B cell (primary cell): ENCODE measurements at regions of chr15 and their contacts with region 1.

Region 1: DNA sequence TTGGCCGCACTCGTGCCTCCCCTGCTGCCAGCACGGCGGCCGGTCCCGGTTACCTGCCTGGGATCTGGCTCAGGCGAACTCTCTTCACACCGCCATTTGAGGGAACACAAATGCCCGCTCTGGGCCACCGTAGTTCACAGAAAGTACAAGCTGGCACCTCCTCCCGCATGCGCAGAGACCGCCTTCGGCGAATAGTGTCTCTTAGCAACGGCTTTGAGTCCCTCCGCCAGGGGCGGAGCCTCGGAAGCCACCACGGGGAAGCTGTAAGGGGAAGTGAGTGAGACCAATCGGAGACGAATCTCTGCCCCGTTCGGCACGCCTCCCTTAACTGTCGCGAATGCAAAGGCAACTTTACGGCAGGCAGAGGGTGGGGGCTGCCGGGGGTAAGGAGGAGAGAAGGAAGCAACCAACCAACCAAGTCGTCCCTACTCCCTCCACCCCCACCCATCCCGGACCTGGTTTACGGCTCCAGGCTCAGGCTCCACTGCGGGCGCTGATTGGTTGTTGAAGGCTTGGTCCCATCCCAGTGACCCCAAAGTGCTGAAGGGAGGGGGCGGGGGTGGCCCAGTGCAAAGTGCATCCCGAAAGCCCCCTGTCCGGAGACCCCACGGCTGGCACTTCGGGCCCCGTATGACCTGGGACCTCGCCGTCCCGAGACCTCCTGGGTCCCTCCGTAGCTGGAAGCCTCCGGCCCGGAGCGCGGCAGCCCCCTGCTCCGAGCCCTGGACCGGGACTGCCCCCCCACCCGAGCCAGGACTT is at the starts of genes ASB7 and LINS1:
- DNase-seq: peak; percentile 100
- ATAC-seq: peak; percentile 86
- H3K4me3 ChIP-seq: peak within 1 kb of the TSS; percentile 67 to 95 (median 92)
- H3K4me3 Mint-ChIP-seq: no peak within 1 kb of the TSS
- H3K27ac ChIP-seq: peak within 1 kb of the TSS; percentile 77 to 93
- H3K27ac Mint-ChIP-seq: no peak within 1 kb of the TSS
- H3K4me1 ChIP-seq: peaks cover 20% of the 10 kb centered on the region in 2 donors
- H3K4me1 Mint-ChIP-seq: peaks cover 42% of the 10 kb centered on the region
- H3K27me3 ChIP-seq: no peaks in the 10 kb centered on the region
- H3K27me3 Mint-ChIP-seq: no peaks in the 10 kb centered on the region
- CTCF ChIP-seq: no peak
- total RNA-seq, gene ASB7: 25.0 and 26.5 TPM in 2 replicates
- total RNA-seq, gene LINS1: 39.6 and 46.4 TPM in 2 replicates

Region 2: DNA sequence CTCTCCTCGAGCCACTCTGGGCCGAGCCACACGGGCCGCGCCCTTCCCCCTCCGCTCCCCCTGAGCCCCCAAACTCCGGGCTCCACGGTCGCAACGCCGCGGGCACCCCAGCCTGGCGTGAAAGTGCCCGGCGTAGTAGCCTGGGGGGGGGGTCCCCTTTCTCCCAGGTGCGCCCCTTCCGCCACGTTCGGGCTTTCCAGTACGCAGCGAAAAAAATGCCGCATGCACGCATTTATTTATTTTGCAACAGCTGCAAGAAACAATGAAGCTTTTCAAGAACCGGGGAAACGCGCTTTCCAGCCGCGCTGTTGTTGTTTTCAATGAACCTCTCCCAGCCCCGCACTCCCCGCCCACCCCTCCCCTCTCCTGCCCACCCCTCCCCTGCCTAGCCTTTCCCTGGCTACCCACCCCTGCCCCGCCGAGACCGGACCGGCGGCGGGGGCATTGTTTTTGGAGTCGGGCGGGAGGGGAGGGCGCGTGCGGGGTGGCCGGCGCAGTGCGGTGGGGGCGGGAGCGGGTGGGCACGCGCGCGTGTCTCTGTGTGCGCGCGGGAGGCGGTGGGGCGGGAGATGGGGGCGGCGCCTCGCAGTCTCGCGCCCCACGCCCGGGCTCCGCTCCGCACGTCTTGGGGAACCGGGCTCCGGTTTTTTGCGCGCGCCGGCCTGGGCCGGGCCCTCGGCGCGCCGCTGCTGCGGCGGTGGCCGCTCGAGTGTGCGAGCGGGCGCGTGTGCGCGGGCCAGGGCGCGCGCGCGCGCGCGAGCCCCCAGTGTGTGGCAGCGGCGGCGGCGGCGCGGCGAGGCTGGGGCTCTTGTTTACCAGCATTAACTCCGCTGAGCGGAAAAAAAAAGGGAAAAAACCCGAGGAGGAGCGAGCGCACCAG is 1954.2 kb before region 1 on chr15 and contains the start of gene IGF1R:
- CTCF ChIA-PET with region 1: no interaction called
- POLR2A ChIA-PET with region 1: no interaction called
- intact Hi-C with region 1: loop called (anchors 5 kb)
- DNase-seq: peak; percentile 94
- ATAC-seq: peak; percentile 80
- H3K4me3 ChIP-seq: peak within 1 kb of the TSS; percentile 42 to 81 (median 78)
- H3K4me3 Mint-ChIP-seq: peak within 1 kb of the TSS; percentile 87
- H3K27ac ChIP-seq: peak within 1 kb of the TSS; percentile 49
- H3K27ac Mint-ChIP-seq: peak within 1 kb of the TSS; percentile 92
- H3K4me1 ChIP-seq: peaks cover 23 to 31% of the 10 kb centered on the region in 2 donors
- H3K4me1 Mint-ChIP-seq: peaks cover 23% of the 10 kb centered on the region
- H3K27me3 ChIP-seq: peaks cover 0 to 23% (median 7%) of the 10 kb centered on the region in 4 experiments
- H3K27me3 Mint-ChIP-seq: peaks cover 32% of the 10 kb centered on the region
- CTCF ChIP-seq: peak; percentile 29
- total RNA-seq, gene IGF1R: 23.1 and 27.3 TPM in 2 replicates

Region 3: GRCh38 chr15:99733268-99734039 is 868.8 kb before region 1 on chr15 and contains the start of gene LYSMD4:
- CTCF ChIA-PET with region 1: no interaction called
- POLR2A ChIA-PET with region 1: no interaction called
- intact Hi-C with region 1: loop called (anchors 5 kb)
- DNase-seq: peak; percentile 96
- ATAC-seq: peak; percentile 100
- H3K4me3 ChIP-seq: peak within 1 kb of the TSS; percentile 12 to 89 (median 77)
- H3K4me3 Mint-ChIP-seq: peak within 1 kb of the TSS; percentile 90
- H3K27ac ChIP-seq: peak within 1 kb of the TSS; percentile 70 to 77
- H3K27ac Mint-ChIP-seq: peak within 1 kb of the TSS; percentile 90
- H3K4me1 ChIP-seq: peaks cover 10 to 13% of the 10 kb centered on the region in 2 donors
- H3K4me1 Mint-ChIP-seq: peaks cover 14% of the 10 kb centered on the region
- H3K27me3 ChIP-seq: no peaks in the 10 kb centered on the region
- H3K27me3 Mint-ChIP-seq: no peaks in the 10 kb centered on the region
- CTCF ChIP-seq: no peak
- total RNA-seq, gene LYSMD4: 8.6 and 9.7 TPM in 2 replicates

Region 4: GRCh38 chr15:100537331-100537730 is 64.9 kb before region 1 on chr15:
- CTCF ChIA-PET with region 1: no interaction called
- POLR2A ChIA-PET with region 1: no interaction called
- intact Hi-C with region 1: loop called (anchors 1 kb)
- DNase-seq: peak; percentile 68
- ATAC-seq: peak; percentile 94
- H3K4me3 ChIP-seq: no peak overlapping the region
- H3K4me3 Mint-ChIP-seq: no peak overlapping the region
- H3K27ac ChIP-seq: no peak overlapping the region
- H3K27ac Mint-ChIP-seq: peak overlapping the region; percentile 7
- H3K4me1 ChIP-seq: peaks cover 13 to 16% of the 10 kb centered on the region in 2 donors
- H3K4me1 Mint-ChIP-seq: peaks cover 14% of the 10 kb centered on the region
- H3K27me3 ChIP-seq: peaks cover 0 to 4% (median 2%) of the 10 kb centered on the region in 4 experiments
- H3K27me3 Mint-ChIP-seq: peaks cover 12% of the 10 kb centered on the region
- CTCF ChIP-seq: no peak

Region 5: DNA sequence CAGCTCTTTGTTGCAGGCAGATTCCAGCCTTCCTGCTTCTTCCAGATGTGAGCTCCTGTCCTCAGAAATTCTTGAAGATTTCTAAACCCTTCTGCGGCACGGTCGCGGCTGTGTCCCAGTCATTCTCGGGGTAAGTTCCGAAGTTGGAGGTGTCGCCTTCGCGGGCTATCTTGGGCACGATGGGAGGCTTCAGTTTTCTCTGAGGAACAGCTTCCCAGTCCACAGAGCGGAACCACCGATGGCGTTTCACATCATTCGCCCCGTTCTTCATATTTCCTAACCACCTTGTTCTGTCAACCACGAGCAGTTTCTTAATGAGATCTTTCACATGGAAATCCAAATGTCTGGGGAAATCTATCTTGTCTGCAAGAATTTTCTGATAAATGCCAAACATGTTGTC is 48.8 kb before region 1 on chr15:
- CTCF ChIA-PET with region 1: no interaction called
- POLR2A ChIA-PET with region 1: no interaction called
- intact Hi-C with region 1: no loop called
- DNase-seq: no peak
- ATAC-seq: no peak
- H3K4me3 ChIP-seq: no peak overlapping the region
- H3K4me3 Mint-ChIP-seq: no peak overlapping the region
- H3K27ac ChIP-seq: no peak overlapping the region
- H3K27ac Mint-ChIP-seq: no peak overlapping the region
- H3K4me1 ChIP-seq: no peaks in the 10 kb centered on the region
- H3K4me1 Mint-ChIP-seq: no peaks in the 10 kb centered on the region
- H3K27me3 ChIP-seq: peaks cover 0 to 3% (median 0%) of the 10 kb centered on the region in 4 experiments
- H3K27me3 Mint-ChIP-seq: no peaks in the 10 kb centered on the region
- CTCF ChIP-seq: no peak

Region 6: DNA sequence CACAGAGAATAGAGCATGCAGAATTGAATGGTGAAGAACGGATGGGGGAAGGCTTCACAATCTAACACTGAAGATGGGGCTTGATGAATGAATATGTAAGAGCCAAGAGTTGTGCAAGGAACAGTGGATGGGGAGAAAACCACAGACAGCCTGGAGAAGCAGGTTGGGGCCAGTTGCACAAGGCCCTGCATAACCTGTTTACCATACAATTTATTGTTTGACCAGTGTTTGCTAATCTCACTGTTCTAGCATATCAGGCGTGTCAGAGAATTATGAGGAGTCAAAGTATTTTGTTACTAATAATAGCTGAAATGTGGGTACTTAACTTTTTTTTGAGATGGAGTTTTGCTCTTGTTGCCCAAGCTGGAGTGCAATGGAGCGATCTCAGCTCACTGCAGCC is 36.7 kb before region 1 on chr15:
- CTCF ChIA-PET with region 1: no interaction called
- POLR2A ChIA-PET with region 1: no interaction called
- intact Hi-C with region 1: no loop called
- DNase-seq: no peak
- ATAC-seq: no peak
- H3K4me3 ChIP-seq: no peak overlapping the region
- H3K4me3 Mint-ChIP-seq: no peak overlapping the region
- H3K27ac ChIP-seq: no peak overlapping the region
- H3K27ac Mint-ChIP-seq: no peak overlapping the region
- H3K4me1 ChIP-seq: no peaks in the 10 kb centered on the region
- H3K4me1 Mint-ChIP-seq: no peaks in the 10 kb centered on the region
- H3K27me3 ChIP-seq: no peaks in the 10 kb centered on the region
- H3K27me3 Mint-ChIP-seq: no peaks in the 10 kb centered on the region
- CTCF ChIP-seq: no peak

Region 7: GRCh38 chr15:100612539-100612938 is 10.3 kb after region 1 on chr15:
- CTCF ChIA-PET with region 1: no interaction called
- POLR2A ChIA-PET with region 1: no interaction called
- intact Hi-C with region 1: no loop called
- DNase-seq: no peak
- ATAC-seq: no peak
- H3K4me3 ChIP-seq: no peak overlapping the region
- H3K4me3 Mint-ChIP-seq: no peak overlapping the region
- H3K27ac ChIP-seq: no peak overlapping the region
- H3K27ac Mint-ChIP-seq: no peak overlapping the region
- H3K4me1 ChIP-seq: no peaks in the 10 kb centered on the region
- H3K4me1 Mint-ChIP-seq: peaks cover 4% of the 10 kb centered on the region
- H3K27me3 ChIP-seq: no peaks in the 10 kb centered on the region
- H3K27me3 Mint-ChIP-seq: no peaks in the 10 kb centered on the region
- CTCF ChIP-seq: no peak

Region 8: DNA sequence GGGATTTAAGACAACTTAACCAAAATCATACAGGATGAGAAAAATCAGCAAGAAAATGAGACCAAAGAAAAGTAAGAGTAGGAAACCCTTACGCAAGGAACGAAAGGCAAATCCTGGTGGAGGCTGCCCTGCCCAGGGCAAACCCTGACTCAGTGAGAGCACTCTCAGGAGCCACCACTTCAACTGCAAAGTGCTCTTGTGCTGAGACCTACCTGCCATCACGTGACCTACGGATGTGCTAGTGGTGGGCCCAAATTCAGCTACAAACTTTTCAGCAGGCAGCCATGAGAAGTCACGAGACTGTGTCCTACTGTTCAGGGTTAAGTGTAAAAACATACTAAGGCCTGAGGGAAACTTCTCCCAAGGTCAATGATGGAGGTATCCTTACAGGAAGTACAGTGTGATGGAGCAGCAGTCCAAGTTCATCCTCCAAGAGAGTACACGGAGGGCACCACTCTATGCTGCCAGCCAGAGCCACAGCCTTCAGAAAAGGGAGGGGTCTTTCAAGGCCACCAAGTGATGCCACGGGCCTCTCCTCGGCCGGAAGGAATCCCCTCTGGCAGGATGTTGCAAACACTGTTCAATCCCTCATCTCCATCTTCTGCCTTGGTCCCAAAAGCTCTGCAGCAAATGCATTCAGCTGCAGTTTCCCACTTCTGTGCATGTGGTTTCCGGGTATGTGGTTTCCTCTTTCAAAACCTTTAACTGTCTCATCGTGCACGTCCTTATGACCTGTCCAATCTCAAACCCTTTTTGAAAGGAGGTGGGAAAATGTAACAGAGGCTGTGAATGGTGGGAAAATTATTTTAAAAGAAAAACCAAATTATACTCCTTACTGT is 640.1 kb after region 1 on chr15:
- CTCF ChIA-PET with region 1: no interaction called
- POLR2A ChIA-PET with region 1: no interaction called
- intact Hi-C with region 1: loop called (anchors 2 kb)
- DNase-seq: peak; percentile 82
- ATAC-seq: peak; percentile 83
- H3K4me3 ChIP-seq: peak overlapping the region; percentile 3 to 41 (median 16)
- H3K4me3 Mint-ChIP-seq: peak overlapping the region; percentile 66
- H3K27ac ChIP-seq: peak overlapping the region in 1 of 2 donors; percentile 46
- H3K27ac Mint-ChIP-seq: peak overlapping the region; percentile 73
- H3K4me1 ChIP-seq: peaks cover 74% of the 10 kb centered on the region in 2 donors
- H3K4me1 Mint-ChIP-seq: peaks cover 84% of the 10 kb centered on the region
- H3K27me3 ChIP-seq: no peaks in the 10 kb centered on the region
- H3K27me3 Mint-ChIP-seq: no peaks in the 10 kb centered on the region
- CTCF ChIP-seq: no peak

Region 9: GRCh38 chr15:101723874-101724674 is 1121.8 kb after region 1 on chr15 and contains the start of gene TARS3:
- CTCF ChIA-PET with region 1: no interaction called
- POLR2A ChIA-PET with region 1: no interaction called
- intact Hi-C with region 1: loop called (anchors 1 kb)
- DNase-seq: peak; percentile 96
- ATAC-seq: peak; percentile 89
- H3K4me3 ChIP-seq: peak within 1 kb of the TSS; percentile 49 to 74 (median 69)
- H3K4me3 Mint-ChIP-seq: peak within 1 kb of the TSS; percentile 82
- H3K27ac ChIP-seq: peak within 1 kb of the TSS; percentile 45 to 77
- H3K27ac Mint-ChIP-seq: peak within 1 kb of the TSS; percentile 80
- H3K4me1 ChIP-seq: peaks cover 10 to 11% of the 10 kb centered on the region in 2 donors
- H3K4me1 Mint-ChIP-seq: peaks cover 17% of the 10 kb centered on the region
- H3K27me3 ChIP-seq: no peaks in the 10 kb centered on the region
- H3K27me3 Mint-ChIP-seq: no peaks in the 10 kb centered on the region
- CTCF ChIP-seq: no peak
- total RNA-seq, gene TARS3: 27.0 and 32.3 TPM in 2 replicates